ENCODE measurements at regions of chr3 and their contacts with region 1.

Region 1: GRCh38 chr3:113844622-113845222 is 6.1 kb downstream of the GRAMD1C start:
- DNase-seq: no peak
- H3K4me3 Mint-ChIP-seq: no peak overlapping the region
- H3K27ac Mint-ChIP-seq: no peak overlapping the region
- H3K4me1 Mint-ChIP-seq: no peaks in the 10 kb centered on the region
- H3K27me3 Mint-ChIP-seq: no peaks in the 10 kb centered on the region

Region 2: DNA sequence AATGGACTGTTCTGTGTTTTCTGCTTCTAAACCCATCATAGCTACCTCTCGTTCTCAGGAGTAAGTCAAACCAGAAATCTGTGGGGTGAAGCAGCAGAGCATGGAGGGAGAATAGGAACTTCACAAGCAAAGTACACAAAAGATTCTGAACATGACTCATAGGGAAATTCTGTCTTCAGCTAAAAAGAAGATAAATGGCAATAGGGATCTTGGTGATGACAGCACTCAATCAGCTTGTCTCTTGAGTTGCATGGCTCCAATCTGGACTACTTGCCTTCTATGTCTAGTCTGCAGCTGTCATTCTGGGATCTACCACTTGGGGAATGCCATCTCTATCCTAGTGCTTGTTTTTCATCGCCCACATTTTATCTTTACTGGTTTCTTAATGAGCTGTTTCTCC is 19.6 kb before region 1 on chr3:
- CTCF ChIA-PET with region 1: interaction called, 12 read pairs
- POLR2A ChIA-PET with region 1: no interaction called
- DNase-seq: no peak
- H3K4me3 Mint-ChIP-seq: no peak overlapping the region
- H3K27ac Mint-ChIP-seq: no peak overlapping the region
- H3K4me1 Mint-ChIP-seq: peaks cover 3% of the 10 kb centered on the region
- H3K27me3 Mint-ChIP-seq: no peaks in the 10 kb centered on the region

Region 3: DNA sequence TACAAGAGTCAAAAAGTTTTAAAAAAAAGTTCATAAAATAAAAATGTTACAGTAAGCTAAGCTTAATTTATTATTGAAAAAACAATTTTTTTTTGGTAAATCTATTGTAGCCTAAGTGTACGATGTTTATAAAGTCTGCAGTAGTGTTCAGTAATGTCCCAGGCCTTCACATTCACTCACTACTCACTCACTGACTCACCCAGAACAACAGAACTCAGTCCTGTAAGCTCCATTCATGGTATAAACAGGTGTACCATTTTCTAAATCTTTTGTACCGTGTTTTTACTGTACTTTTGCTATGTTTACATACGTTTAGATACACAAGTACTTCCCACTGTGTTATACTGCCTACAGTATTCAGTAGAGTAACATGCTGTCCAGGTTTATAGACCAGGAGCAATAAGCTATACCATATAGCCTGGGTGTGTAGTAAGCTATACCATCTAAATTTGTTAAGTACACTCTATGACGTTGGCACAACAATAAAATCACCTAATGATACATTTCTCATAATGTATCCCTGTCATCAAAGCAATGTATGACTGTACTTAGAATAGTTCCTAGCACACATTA is 61.9 kb after region 1 on chr3:
- CTCF ChIA-PET with region 1: interaction called, 12 read pairs
- POLR2A ChIA-PET with region 1: no interaction called
- DNase-seq: no peak
- H3K4me3 Mint-ChIP-seq: no peak overlapping the region
- H3K27ac Mint-ChIP-seq: no peak overlapping the region
- H3K4me1 Mint-ChIP-seq: no peaks in the 10 kb centered on the region
- H3K27me3 Mint-ChIP-seq: peaks cover 1% of the 10 kb centered on the region

Region 4: DNA sequence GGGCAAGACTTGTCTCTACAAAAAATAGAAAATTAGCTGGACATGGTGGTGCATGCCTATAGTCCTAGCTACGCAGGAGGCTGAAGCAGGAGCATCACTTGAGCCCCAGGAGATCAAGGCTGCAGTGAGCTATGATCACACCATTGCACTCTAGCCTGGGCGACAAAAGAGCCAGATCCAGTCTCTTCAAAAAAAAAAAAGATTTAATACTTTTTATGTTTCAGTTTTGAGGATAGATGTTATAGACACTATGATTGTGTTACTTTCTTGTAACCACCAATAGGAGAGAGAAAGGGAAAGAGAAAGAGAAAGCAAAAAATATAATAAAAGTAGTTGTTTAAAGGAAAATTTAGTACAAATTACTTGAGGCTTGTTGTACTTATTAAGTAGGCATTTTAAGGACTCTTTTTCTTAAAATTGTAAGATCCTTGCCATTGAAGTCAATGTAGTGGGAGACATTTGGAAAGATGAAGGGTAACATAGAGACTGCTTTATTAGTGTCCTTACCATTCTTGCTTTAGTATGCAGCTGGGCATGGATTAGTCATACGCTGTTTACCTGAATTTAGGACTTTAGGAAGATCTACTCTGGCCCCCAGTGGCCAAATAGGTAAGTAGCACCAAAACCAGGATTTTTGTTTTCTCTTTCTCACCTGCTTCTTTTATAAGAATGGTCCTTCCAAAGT is 68.0 kb after region 1 on chr3:
- CTCF ChIA-PET with region 1: interaction called, 32 read pairs
- POLR2A ChIA-PET with region 1: no interaction called
- DNase-seq: peak; percentile 26
- H3K4me3 Mint-ChIP-seq: peak overlapping the region; percentile 63
- H3K27ac Mint-ChIP-seq: peak overlapping the region; percentile 35
- H3K4me1 Mint-ChIP-seq: peaks cover 8% of the 10 kb centered on the region
- H3K27me3 Mint-ChIP-seq: no peaks in the 10 kb centered on the region

Region 5: DNA sequence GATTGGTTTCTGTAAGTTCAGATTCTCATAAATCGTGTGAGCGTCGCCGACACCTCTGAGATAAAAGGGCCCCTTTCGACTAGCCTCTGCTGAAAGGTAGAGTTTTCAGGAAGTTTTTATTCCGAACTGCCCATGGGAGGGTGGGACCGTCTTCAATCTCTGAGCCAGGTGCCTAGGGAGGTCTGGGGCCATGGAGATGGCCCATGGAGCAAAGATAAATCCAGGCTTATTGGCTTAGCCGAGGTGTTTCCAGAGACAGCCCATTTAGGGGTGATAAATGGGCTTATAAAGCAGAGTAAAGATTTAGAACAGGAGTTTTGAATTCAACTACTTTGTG is 212.3 kb after region 1 on chr3:
- CTCF ChIA-PET with region 1: no interaction called
- POLR2A ChIA-PET with region 1: no interaction called
- DNase-seq: peak; percentile 17
- H3K4me3 Mint-ChIP-seq: peak overlapping the region; percentile 92
- H3K27ac Mint-ChIP-seq: peak overlapping the region; percentile 84
- H3K4me1 Mint-ChIP-seq: peaks cover 38% of the 10 kb centered on the region
- H3K27me3 Mint-ChIP-seq: no peaks in the 10 kb centered on the region